ENCODE measurements at regions of chr2 and their contacts with region 1.

Region 1: GRCh38 chr2:181573140-181573736 is 83.7 kb downstream of the CERKL start:
- DNase-seq: no peak
- ATAC-seq: no peak
- H3K4me3 ChIP-seq: no peak overlapping the region
- H3K27ac ChIP-seq: no peak overlapping the region
- H3K4me1 ChIP-seq: no peaks in the 10 kb centered on the region
- H3K27me3 ChIP-seq: no peaks in the 10 kb centered on the region
- CTCF ChIP-seq: peak in 6 of 7 experiments; percentile 26 to 66 (median 50)
- POLR2A ChIP-seq: no peak

Region 2: DNA sequence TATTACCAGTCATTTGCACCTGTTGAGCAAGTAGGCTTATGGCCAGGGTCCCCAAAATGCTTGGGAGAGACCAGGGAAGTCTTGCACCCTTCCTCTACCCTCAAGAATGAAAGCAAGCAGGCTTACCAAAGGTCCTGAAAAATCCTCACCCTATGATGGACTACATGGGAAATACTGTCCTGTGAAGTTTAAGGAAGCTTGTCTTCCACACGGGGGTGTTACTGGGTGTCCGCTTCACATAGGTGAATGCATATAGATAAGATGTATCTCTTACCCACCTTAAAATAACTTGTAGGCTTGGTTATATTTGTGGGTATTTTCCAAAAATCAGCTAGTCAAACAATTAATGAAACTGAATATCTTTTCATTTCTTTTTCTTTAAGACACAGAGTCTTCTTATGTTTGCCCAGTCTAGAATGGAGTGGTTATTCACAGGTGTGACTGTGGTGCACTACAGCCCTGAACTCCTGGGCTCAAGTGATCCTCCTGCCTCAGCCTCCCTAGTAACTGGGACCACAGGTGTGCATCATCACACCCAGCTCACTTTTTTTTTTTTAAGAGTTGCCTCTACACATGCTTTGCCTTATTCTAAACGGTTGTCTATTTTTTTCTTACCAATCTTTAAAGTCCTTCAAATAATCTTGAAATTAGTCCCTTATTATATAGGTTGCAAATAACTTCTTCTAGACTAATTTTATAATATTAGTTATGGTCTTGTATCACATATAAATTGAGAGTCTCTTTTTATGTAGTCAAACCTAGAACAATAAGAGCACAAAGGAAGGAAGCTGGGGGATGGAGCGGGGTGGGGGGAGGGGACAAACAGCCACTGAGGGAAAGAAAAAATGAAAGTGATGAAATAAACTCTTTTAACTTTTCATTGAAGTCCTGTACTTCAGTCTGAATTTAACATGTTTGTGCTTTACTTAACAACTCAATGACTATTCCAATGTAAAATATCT is 34.7 kb after region 1 on chr2:
- intact Hi-C with region 1: no loop called
- DNase-seq: no peak
- ATAC-seq: no peak
- H3K4me3 ChIP-seq: no peak overlapping the region
- H3K27ac ChIP-seq: no peak overlapping the region
- H3K4me1 ChIP-seq: no peaks in the 10 kb centered on the region
- H3K27me3 ChIP-seq: no peaks in the 10 kb centered on the region
- CTCF ChIP-seq: no peak
- POLR2A ChIP-seq: no peak

Region 3: DNA sequence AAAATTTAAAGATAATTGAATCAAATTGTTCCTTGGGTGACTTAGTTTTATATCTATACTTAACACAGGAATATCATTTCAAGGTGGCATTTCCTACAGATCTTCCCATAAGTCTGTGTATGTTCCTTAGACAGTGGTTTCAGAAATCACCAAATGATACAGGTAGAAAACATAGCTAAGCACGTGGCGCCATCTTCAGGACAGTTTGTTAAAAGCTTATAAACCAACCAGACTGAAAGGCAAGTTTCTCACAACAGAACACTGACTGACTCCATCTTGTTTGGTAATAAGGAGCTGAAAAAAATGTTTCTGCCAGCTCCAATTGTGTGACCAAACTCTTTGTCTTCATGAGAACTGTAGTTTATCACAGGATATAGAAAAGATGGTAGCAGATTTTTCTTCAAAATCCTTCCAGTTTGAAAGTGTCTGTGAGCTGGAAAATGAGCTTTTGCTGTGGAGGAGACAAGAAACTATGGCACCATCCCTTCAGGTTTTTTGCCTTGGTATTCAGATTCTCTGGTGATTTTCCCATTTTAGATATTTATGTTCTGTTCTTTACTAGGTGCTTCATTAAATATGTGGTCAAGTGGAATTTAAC is 141.9 kb after region 1 on chr2:
- intact Hi-C with region 1: loop called (anchors 10 kb)
- DNase-seq: peak; percentile 72 to 83 (median 79)
- ATAC-seq: peak; percentile 80
- H3K4me3 ChIP-seq: no peak overlapping the region
- H3K27ac ChIP-seq: no peak overlapping the region
- H3K4me1 ChIP-seq: no peaks in the 10 kb centered on the region
- H3K27me3 ChIP-seq: no peaks in the 10 kb centered on the region
- CTCF ChIP-seq: peak; percentile 51 to 83 (median 70)
- POLR2A ChIP-seq: no peak

Measured in body of pancreas (tissue), 4 donors.